PC-9 (cell line): ENCODE measurements at regions of chr9 and their contacts with region 1.

Region 1: GRCh38 chr9:136631038-136632000 is 31.4 kb upstream of the EGFL7 start:
- DNase-seq: peak; percentile 52 to 74
- H3K4me3 ChIP-seq: no peak overlapping the region
- H3K27ac ChIP-seq: no peak overlapping the region
- H3K4me1 ChIP-seq: 0 out of 2 replicates have a peak, but pooled peaks cover 3% of the 10 kb centered on the region
- H3K27me3 ChIP-seq: no peaks in the 10 kb centered on the region
- CTCF ChIP-seq: peak; percentile 85

Region 2: GRCh38 chr9:135602789-135603481 is 1028.4 kb before region 1 on chr9:
- CTCF ChIA-PET with region 1: no interaction called
- POLR2A ChIA-PET with region 1: no interaction called
- intact Hi-C with region 1: loop called (anchors 5 kb)
- DNase-seq: peak in 1 of 2 experiments; percentile 48
- H3K4me3 ChIP-seq: no peak overlapping the region
- H3K27ac ChIP-seq: no peak overlapping the region
- H3K4me1 ChIP-seq: no peaks in the 10 kb centered on the region
- H3K27me3 ChIP-seq: peaks cover 70% of the 10 kb centered on the region
- CTCF ChIP-seq: peak; percentile 90

Region 3: GRCh38 chr9:136312436-136312835 is 318.9 kb before region 1 on chr9:
- CTCF ChIA-PET with region 1: no interaction called
- POLR2A ChIA-PET with region 1: no interaction called
- intact Hi-C with region 1: loop called (anchors 10 kb)
- DNase-seq: peak in 1 of 2 experiments; percentile 69
- H3K4me3 ChIP-seq: no peak overlapping the region
- H3K27ac ChIP-seq: no peak overlapping the region
- H3K4me1 ChIP-seq: peaks cover 10% of the 10 kb centered on the region
- H3K27me3 ChIP-seq: peaks cover 7% of the 10 kb centered on the region; the same call in 1 of the 2 replicates
- CTCF ChIP-seq: peak; percentile 77

Region 4: GRCh38 chr9:136400038-136400834 is 231.1 kb before region 1 on chr9 and contains the start of gene SNAPC4:
- CTCF ChIA-PET with region 1: no interaction called
- POLR2A ChIA-PET with region 1: no interaction called
- intact Hi-C with region 1: loop called (anchors 2 kb)
- DNase-seq: peak; percentile 76 to 91
- H3K4me3 ChIP-seq: peak within 1 kb of the TSS; percentile 100
- H3K27ac ChIP-seq: no peak within 1 kb of the TSS
- H3K4me1 ChIP-seq: peaks cover 13% of the 10 kb centered on the region
- H3K27me3 ChIP-seq: no peaks in the 10 kb centered on the region
- CTCF ChIP-seq: peak; percentile 85
- total RNA-seq, gene SNAPC4: 13.3 and 14.4 TPM in 2 replicates

Region 5: DNA sequence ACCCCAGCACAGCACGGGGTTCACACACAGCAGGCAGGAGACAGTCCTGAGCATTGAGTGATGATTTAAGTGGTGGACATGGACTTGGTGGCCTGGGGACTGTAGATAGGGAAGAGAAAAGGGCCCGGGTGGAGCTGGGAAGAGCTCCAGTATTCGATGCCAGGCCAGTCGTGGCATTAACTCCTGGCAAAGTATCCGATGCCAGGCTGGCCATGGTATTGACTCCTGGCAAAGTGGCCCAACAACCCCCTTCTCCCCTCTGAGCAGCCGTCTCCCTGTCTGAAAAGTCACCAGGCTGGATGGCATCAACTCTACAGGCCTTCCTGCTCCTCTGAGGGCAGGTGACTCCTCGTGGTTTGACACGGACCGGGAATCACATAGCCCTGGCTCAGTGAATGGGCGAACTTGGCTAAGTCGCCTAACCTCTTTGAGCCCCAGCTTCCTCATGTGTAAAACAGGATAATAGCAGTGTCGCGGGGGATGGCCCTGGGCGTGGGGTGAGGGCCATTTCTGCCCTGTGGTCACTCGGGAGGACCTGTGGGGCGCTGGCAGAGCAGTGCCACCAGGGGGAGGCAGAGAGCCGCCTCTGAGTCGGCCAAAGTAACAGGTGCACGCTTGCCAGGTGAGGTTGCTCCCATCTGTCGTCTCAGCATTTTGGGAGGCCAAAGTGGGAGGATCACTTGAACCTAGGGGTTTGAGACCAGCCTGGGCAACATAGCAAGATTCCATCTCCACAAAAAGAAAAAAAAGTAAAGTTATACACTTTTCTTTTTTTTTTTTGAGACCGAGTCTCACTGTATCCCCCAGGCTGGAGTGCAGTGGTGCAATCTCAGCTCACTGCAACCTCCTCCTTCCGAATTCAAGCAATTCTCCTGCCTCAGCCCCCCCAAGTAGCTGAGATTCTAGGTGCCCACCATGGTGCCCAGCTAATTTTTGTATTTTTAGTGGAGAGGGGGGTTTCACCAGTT is 142.8 kb before region 1 on chr9:
- CTCF ChIA-PET with region 1: interaction called, 38 read pairs
- POLR2A ChIA-PET with region 1: no interaction called
- intact Hi-C with region 1: loop called (anchors 1 kb)
- DNase-seq: peak; percentile 50 to 87
- H3K4me3 ChIP-seq: no peak overlapping the region
- H3K27ac ChIP-seq: no peak overlapping the region
- H3K4me1 ChIP-seq: peaks cover 7% of the 10 kb centered on the region
- H3K27me3 ChIP-seq: no peaks in the 10 kb centered on the region
- CTCF ChIP-seq: peak; percentile 98

Region 6: DNA sequence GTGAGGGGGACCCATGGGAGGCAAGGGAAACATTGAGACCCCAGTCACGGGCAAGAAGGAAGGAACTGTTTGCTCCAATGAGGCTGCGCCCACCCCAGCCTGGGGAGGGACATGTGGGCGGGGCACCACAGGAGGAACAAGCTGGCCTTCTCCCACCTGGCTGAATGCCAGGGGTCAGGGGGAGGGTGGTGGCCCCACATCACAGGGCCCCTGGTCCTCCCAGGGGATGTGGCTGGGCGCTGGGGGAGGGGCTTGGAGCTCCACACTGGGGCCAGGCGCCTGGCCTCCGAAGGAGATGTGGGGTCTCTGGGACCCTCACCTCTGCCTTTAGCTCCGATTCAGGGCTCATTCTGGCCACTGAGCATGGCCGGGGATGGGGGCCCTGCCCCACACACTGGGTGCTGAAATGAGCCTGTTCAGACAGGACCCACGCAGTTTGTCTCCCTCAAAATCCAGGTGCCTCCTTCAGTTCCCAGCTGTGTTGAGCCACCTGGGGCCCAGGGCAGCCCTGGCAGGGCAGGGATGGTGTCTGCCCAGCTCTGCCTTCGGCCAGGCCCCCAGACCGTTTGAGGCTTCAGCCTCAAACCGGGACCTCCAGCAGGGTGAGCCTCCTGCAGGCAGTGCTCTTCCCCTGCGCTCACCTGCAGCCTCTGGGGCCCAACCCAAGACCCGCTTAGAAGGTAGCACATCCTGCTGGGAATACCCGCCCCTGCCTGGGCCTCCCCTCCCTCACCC is 52.2 kb before region 1 on chr9:
- CTCF ChIA-PET with region 1: interaction called, 4 read pairs
- POLR2A ChIA-PET with region 1: no interaction called
- intact Hi-C with region 1: loop called (anchors 5 kb)
- DNase-seq: peak in 1 of 2 experiments; percentile 34
- H3K4me3 ChIP-seq: no peak overlapping the region; the same call in 1 of the 2 replicates
- H3K27ac ChIP-seq: peak overlapping the region; percentile 70; the same call in 1 of the 2 replicates
- H3K4me1 ChIP-seq: peaks cover 26% of the 10 kb centered on the region
- H3K27me3 ChIP-seq: no peaks in the 10 kb centered on the region
- CTCF ChIP-seq: no peak

Region 7: DNA sequence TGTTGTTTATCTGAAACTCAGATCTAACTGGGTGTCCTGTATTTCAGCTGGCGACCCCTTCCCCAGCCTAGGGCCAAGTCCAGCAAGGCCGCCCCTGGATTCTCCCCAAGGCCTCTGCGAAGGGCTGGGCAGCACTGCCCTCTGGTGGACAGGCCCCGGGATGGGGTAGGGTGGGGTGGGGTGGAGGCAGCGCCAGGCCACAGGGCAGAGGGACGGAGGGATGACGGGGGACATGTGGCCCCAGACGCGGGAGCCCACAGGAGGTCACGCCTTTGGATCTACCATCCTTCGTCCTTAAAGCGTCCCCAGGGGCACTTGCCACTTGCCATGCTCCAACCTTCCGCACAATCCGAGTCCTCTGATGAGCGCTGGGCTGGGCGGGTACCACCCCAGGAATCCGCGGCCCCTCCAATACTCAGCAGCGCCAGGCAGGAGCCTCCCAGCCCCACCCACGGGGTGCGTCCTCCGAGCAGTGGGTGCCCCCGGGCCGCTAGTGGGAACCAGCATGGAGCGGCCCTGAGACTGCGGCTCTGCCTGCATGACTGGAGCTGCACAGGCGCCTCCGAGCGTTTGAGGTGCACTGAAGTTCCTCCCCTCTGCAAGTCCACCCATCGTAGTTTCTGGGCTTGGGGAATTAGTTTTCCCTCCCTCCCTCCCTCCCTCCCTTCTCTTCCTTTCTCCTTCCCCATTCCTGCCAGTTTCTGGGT is 63.1 kb after region 1 on chr9:
- CTCF ChIA-PET with region 1: no interaction called
- POLR2A ChIA-PET with region 1: interaction called, 7 read pairs
- intact Hi-C with region 1: loop called (anchors 2 kb)
- DNase-seq: peak in 1 of 2 experiments; percentile 82
- H3K4me3 ChIP-seq: peak overlapping the region; percentile 43; the same call in 1 of the 2 replicates
- H3K27ac ChIP-seq: peak overlapping the region; percentile 94
- H3K4me1 ChIP-seq: peaks cover 47% of the 10 kb centered on the region
- H3K27me3 ChIP-seq: no peaks in the 10 kb centered on the region
- CTCF ChIP-seq: peak; percentile 91